IMR-90 (cell line): ENCODE measurements at regions of chr6 and their contacts with region 1.

Region 1: GRCh38 chr6:80605165-80605989 is 498.9 kb downstream of the BCKDHB start:
- DNase-seq: peak; percentile 68
- ATAC-seq: peak; percentile 71
- H3K4me3 ChIP-seq: no peak overlapping the region
- H3K27ac ChIP-seq: no peak overlapping the region
- H3K4me1 ChIP-seq: peaks cover 3% of the 10 kb centered on the region; the same call in 1 of the 2 replicates
- H3K27me3 ChIP-seq: no peaks in the 10 kb centered on the region
- CTCF ChIP-seq: peak; percentile 56
- POLR2A ChIP-seq: no peak
- RAD21 ChIP-seq: peak; percentile 64

Region 2: DNA sequence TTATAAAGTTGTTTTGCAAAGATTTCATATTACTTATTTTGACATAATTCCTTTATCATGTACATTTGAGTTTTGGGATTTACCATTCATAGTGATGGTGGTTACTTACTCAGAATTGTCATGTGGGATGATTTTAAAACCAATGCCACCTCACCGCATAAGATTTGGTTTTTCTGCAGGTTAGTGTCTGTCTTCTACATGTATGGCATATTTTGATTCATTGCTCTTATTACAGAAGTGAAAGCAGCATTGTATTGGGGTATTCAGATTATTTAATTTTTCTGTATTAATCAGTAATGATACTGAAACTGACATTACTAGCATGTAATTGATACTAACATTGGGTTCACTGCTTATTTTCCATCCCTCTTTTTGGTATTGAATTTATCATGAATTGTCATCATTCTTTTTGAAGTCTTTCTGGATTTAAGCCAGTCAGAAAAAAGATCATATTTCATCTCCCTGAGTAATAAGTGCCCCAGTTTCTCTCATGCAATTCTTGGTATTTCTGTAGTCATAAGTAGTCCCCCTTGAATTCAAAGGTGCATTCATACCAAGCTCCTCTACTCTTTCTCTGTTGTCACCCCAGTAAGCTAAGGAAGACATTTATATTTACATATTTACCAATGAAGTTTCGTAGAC is 322.3 kb before region 1 on chr6:
- CTCF ChIA-PET with region 1: no interaction called
- POLR2A ChIA-PET with region 1: no interaction called
- dilution Hi-C with region 1: no loop called
- in situ Hi-C with region 1: no loop called
- intact Hi-C with region 1: no loop called
- DNase-seq: no peak
- ATAC-seq: no peak
- H3K4me3 ChIP-seq: no peak overlapping the region
- H3K27ac ChIP-seq: no peak overlapping the region
- H3K4me1 ChIP-seq: 0 out of 2 replicates have a peak, but pooled peaks cover 2% of the 10 kb centered on the region
- H3K27me3 ChIP-seq: no peaks in the 10 kb centered on the region
- CTCF ChIP-seq: no peak
- POLR2A ChIP-seq: no peak
- RAD21 ChIP-seq: no peak

Region 3: GRCh38 chr6:80338201-80338836 is 267.1 kb before region 1 on chr6:
- CTCF ChIA-PET with region 1: no interaction called
- POLR2A ChIA-PET with region 1: no interaction called
- dilution Hi-C with region 1: no loop called
- in situ Hi-C with region 1: no loop called
- intact Hi-C with region 1: loop called (anchors 2 kb)
- DNase-seq: peak; percentile 54
- ATAC-seq: peak; percentile 50; the same call in 1 of the 2 replicates
- H3K4me3 ChIP-seq: no peak overlapping the region
- H3K27ac ChIP-seq: no peak overlapping the region
- H3K4me1 ChIP-seq: no peaks in the 10 kb centered on the region
- H3K27me3 ChIP-seq: no peaks in the 10 kb centered on the region
- CTCF ChIP-seq: peak; percentile 57
- POLR2A ChIP-seq: no peak
- RAD21 ChIP-seq: peak; percentile 63

Region 4: GRCh38 chr6:80832337-80832736 is 227.0 kb after region 1 on chr6:
- CTCF ChIA-PET with region 1: no interaction called
- POLR2A ChIA-PET with region 1: no interaction called
- dilution Hi-C with region 1: no loop called
- in situ Hi-C with region 1: no loop called
- intact Hi-C with region 1: no loop called
- DNase-seq: no peak
- ATAC-seq: no peak
- H3K4me3 ChIP-seq: no peak overlapping the region
- H3K27ac ChIP-seq: no peak overlapping the region
- H3K4me1 ChIP-seq: no peaks in the 10 kb centered on the region
- H3K27me3 ChIP-seq: no peaks in the 10 kb centered on the region
- CTCF ChIP-seq: no peak
- POLR2A ChIP-seq: no peak
- RAD21 ChIP-seq: no peak

Region 5: DNA sequence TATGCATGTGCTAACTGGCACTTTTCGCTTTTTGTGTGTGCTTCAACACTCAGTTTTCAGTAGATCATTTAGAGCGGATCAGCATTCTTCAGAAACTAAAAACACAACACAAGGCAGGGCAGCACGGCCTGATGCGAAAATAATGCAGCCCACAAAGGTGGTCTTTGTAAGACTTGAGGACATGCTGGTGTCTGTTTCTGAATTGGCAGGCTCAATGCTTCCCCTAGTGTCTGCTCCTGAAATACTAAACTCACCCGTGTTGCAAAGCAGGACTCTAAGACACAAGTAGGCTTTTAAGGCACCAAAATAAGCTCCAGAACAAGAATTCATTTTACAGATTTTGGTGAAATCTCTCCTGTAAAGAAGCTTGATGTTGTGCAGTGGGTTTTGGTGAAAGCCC is 470.6 kb after region 1 on chr6:
- CTCF ChIA-PET with region 1: interaction called, 3 read pairs
- POLR2A ChIA-PET with region 1: no interaction called
- dilution Hi-C with region 1: no loop called
- in situ Hi-C with region 1: no loop called
- intact Hi-C with region 1: loop called (anchors 5 kb)
- DNase-seq: peak; percentile 12
- ATAC-seq: peak; percentile 35; the same call in 1 of the 2 replicates
- H3K4me3 ChIP-seq: no peak overlapping the region
- H3K27ac ChIP-seq: no peak overlapping the region
- H3K4me1 ChIP-seq: no peaks in the 10 kb centered on the region
- H3K27me3 ChIP-seq: no peaks in the 10 kb centered on the region
- CTCF ChIP-seq: peak; percentile 39
- POLR2A ChIP-seq: no peak
- RAD21 ChIP-seq: peak; percentile 32; the same call in 1 of the 2 replicates

Region 6: GRCh38 chr6:81465859-81466258 is 860.5 kb after region 1 on chr6:
- CTCF ChIA-PET with region 1: no interaction called
- POLR2A ChIA-PET with region 1: no interaction called
- dilution Hi-C with region 1: no loop called
- in situ Hi-C with region 1: no loop called
- intact Hi-C with region 1: loop called (anchors 10 kb)
- DNase-seq: peak; percentile 24
- ATAC-seq: no peak
- H3K4me3 ChIP-seq: no peak overlapping the region
- H3K27ac ChIP-seq: no peak overlapping the region
- H3K4me1 ChIP-seq: no peaks in the 10 kb centered on the region
- H3K27me3 ChIP-seq: no peaks in the 10 kb centered on the region
- CTCF ChIP-seq: peak; percentile 55
- POLR2A ChIP-seq: no peak
- RAD21 ChIP-seq: peak; percentile 56